ENCODE measurements at regions of chr2 and their contacts with region 1.

Region 1: DNA sequence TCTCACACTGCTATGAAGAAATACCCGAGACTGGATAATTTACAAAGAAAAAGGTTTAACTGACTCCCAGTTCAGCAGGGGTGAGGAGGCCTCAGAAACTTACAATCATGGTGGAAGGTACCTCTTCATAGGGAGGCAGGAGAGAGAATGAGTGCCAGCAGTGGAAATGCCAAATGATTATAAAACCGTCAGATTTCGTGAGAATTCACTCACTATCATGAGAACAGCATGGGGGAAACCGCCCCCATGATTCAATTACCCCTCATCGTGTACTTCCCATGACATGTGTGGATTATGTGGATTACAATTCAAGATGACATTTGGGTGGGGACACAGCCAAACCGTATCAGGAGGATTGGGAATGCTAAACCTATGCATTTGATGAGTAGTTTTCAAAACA is 380.3 kb upstream of the SPHKAP start:
- DNase-seq: no peak
- ATAC-seq: no peak
- H3K4me3 ChIP-seq: no peak overlapping the region
- H3K27ac ChIP-seq: no peak overlapping the region
- H3K4me1 ChIP-seq: no peaks in the 10 kb centered on the region
- H3K27me3 ChIP-seq: no peaks in the 10 kb centered on the region
- CTCF ChIP-seq: no peak
- POLR2A ChIP-seq: no peak
- RAD21 ChIP-seq: no peak

Region 2: GRCh38 chr2:227783404-227784138 is 778.2 kb before region 1 on chr2:
- CTCF ChIA-PET with region 1: no interaction called
- POLR2A ChIA-PET with region 1: no interaction called
- dilution Hi-C with region 1: no loop called
- in situ Hi-C with region 1: no loop called
- intact Hi-C with region 1: no loop called
- DNase-seq: no peak
- ATAC-seq: no peak
- H3K4me3 ChIP-seq: no peak overlapping the region
- H3K27ac ChIP-seq: no peak overlapping the region
- H3K4me1 ChIP-seq: no peaks in the 10 kb centered on the region
- H3K27me3 ChIP-seq: peaks cover 3% of the 10 kb centered on the region; the same call in 1 of the 2 replicates
- CTCF ChIP-seq: no peak
- POLR2A ChIP-seq: no peak
- RAD21 ChIP-seq: no peak

Region 3: DNA sequence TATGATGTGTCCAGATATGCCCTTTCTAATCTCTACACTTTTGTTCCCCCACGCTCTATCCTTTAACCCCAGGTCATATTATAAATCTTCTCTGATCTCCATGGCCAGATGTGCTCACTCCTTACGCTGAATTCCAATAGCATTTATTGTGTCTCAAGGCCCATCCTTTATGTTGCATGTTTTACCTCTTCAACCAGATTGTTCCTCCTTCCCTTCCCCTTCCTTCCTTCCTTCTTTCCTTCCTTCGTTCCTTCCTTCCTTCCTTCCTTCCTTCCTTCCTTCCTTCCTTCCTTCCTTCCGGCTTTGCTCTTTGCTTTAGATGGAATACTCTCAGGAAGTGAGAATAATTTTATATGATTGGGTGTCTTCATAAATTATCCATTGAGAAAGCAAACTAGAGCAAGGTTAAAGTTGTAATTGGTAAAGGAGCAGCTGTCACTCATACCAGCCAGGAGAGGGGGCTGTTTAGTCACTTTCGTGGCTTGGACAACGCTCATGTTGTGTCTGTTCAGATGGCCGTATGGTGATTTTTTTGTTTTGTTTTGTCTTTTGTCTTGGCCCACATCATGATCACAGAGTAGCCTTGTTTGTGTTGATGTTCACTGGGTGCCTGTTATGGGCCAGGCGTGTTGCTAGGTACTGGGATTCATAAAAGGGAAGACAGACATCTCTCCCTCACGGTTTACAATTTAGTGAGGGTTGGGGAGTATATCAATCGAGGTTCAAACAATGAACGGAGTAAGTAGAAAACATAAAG is 622.4 kb before region 1 on chr2:
- CTCF ChIA-PET with region 1: no interaction called
- POLR2A ChIA-PET with region 1: no interaction called
- dilution Hi-C with region 1: no loop called
- in situ Hi-C with region 1: no loop called
- intact Hi-C with region 1: no loop called
- DNase-seq: peak; percentile 15
- ATAC-seq: peak; percentile 67
- H3K4me3 ChIP-seq: no peak overlapping the region
- H3K27ac ChIP-seq: no peak overlapping the region
- H3K4me1 ChIP-seq: no peaks in the 10 kb centered on the region
- H3K27me3 ChIP-seq: no peaks in the 10 kb centered on the region
- CTCF ChIP-seq: peak; percentile 25; the same call in 1 of the 2 replicates
- POLR2A ChIP-seq: no peak
- RAD21 ChIP-seq: peak; percentile 16; the same call in 1 of the 2 replicates

Region 4: GRCh38 chr2:228527197-228527881 is 34.5 kb before region 1 on chr2:
- CTCF ChIA-PET with region 1: no interaction called
- POLR2A ChIA-PET with region 1: no interaction called
- dilution Hi-C with region 1: no loop called
- in situ Hi-C with region 1: no loop called
- intact Hi-C with region 1: loop called (anchors 1 kb)
- DNase-seq: peak; percentile 3
- ATAC-seq: no peak
- H3K4me3 ChIP-seq: no peak overlapping the region
- H3K27ac ChIP-seq: no peak overlapping the region
- H3K4me1 ChIP-seq: no peaks in the 10 kb centered on the region
- H3K27me3 ChIP-seq: no peaks in the 10 kb centered on the region
- CTCF ChIP-seq: no peak
- POLR2A ChIP-seq: no peak
- RAD21 ChIP-seq: no peak

Measured in IMR-90 (cell line).